PC-3 (cell line): ENCODE measurements at regions of chr12 and their contacts with region 1.

Region 1: GRCh38 chr12:39892146-39892545 is 213.7 kb downstream of the SLC2A13 start:
- DNase-seq: no peak
- ATAC-seq: no peak
- H3K4me3 ChIP-seq: no peak overlapping the region
- H3K27ac ChIP-seq: no peak overlapping the region
- H3K4me1 ChIP-seq: no peaks in the 10 kb centered on the region
- H3K27me3 ChIP-seq: no peaks in the 10 kb centered on the region
- CTCF ChIP-seq: no peak

Region 2: GRCh38 chr12:39587225-39587624 is 304.9 kb before region 1 on chr12:
- CTCF ChIA-PET with region 1: no interaction called
- POLR2A ChIA-PET with region 1: no interaction called
- intact Hi-C with region 1: no loop called
- DNase-seq: peak; percentile 45
- ATAC-seq: peak; percentile 63; the same call in 1 of the 2 replicates
- H3K4me3 ChIP-seq: no peak overlapping the region
- H3K27ac ChIP-seq: no peak overlapping the region
- H3K4me1 ChIP-seq: peaks cover 6% of the 10 kb centered on the region
- H3K27me3 ChIP-seq: no peaks in the 10 kb centered on the region
- CTCF ChIP-seq: peak; percentile 52; the same call in 1 of the 2 replicates

Region 3: DNA sequence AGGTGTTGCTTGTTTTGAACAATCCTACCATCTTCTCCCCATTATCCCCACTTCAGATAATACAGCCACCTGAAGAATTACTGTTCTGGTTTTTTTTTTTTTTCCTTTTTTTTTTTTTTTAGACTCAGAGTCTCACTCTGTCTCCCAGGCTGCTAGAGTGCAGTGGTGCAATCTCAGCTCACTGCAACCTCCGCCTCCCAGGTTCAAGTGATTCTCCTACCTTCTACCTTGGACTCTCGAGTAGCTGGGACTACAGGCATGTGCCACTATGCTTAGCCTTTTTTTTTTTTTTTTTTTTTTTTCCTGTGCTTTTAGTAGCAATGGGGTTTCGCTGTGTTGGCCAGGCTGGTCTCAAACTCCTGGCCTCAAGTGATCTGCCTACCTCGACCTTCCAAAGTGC is 93.2 kb before region 1 on chr12:
- CTCF ChIA-PET with region 1: no interaction called
- POLR2A ChIA-PET with region 1: interaction called, 15 read pairs
- intact Hi-C with region 1: no loop called
- DNase-seq: no peak
- ATAC-seq: no peak
- H3K4me3 ChIP-seq: no peak overlapping the region
- H3K27ac ChIP-seq: no peak overlapping the region
- H3K4me1 ChIP-seq: no peaks in the 10 kb centered on the region
- H3K27me3 ChIP-seq: no peaks in the 10 kb centered on the region
- CTCF ChIP-seq: no peak